Heart right ventricle (tissue), 16 donors: ENCODE measurements at regions of chr9 and their contacts with region 1.

Region 1: GRCh38 chr9:122236681-122237080 is 7.9 kb upstream of the LHX6 start:
- DNase-seq: no peak
- ATAC-seq: no peak
- H3K4me3 ChIP-seq: no peak overlapping the region
- H3K27ac ChIP-seq: no peak overlapping the region
- H3K4me1 ChIP-seq: peaks cover 0 to 10% (median 0%) of the 10 kb centered on the region in 9 donors
- H3K27me3 ChIP-seq: peaks cover 0 to 20% (median 0%) of the 10 kb centered on the region in 7 donors
- CTCF ChIP-seq: no peak

Region 2: GRCh38 chr9:122131401-122132001 is 105.2 kb before region 1 on chr9:
- intact Hi-C with region 1: loop called in 1 of 10 experiments (anchors 10 kb)
- DNase-seq: peak in 1 of 2 donors; percentile 41
- ATAC-seq: peak; percentile 27 to 78 (median 64)
- H3K4me3 ChIP-seq: peak overlapping the region in 2 of 10 donors; percentile 11 to 17
- H3K27ac ChIP-seq: peak overlapping the region in 1 of 10 donors; percentile 6
- H3K4me1 ChIP-seq: peaks cover 9 to 82% (median 40%) of the 10 kb centered on the region in 9 donors
- H3K27me3 ChIP-seq: peaks cover 0 to 20% (median 0%) of the 10 kb centered on the region in 7 donors
- CTCF ChIP-seq: no peak

Region 3: GRCh38 chr9:122168356-122168755 is 68.3 kb before region 1 on chr9:
- intact Hi-C with region 1: no loop called
- DNase-seq: no peak
- ATAC-seq: peak in 3 of 8 donors; percentile 42 to 60 (median 57)
- H3K4me3 ChIP-seq: no peak overlapping the region
- H3K27ac ChIP-seq: peak overlapping the region in 3 of 10 donors; percentile 1 to 58 (median 18)
- H3K4me1 ChIP-seq: peaks cover 0 to 7% (median 0%) of the 10 kb centered on the region in 9 donors
- H3K27me3 ChIP-seq: peaks cover 0 to 11% (median 3%) of the 10 kb centered on the region in 7 donors
- CTCF ChIP-seq: no peak